A673 (cell line): ENCODE measurements at regions of chr15 and their contacts with region 1.

Region 1: GRCh38 chr15:63551400-63551799 is 45.8 kb upstream of the FBXL22 start:
- DNase-seq: no peak
- H3K4me3 ChIP-seq: no peak overlapping the region
- H3K27ac ChIP-seq: no peak overlapping the region
- H3K4me1 ChIP-seq: peaks cover 28% of the 10 kb centered on the region
- H3K27me3 ChIP-seq: no peaks in the 10 kb centered on the region
- CTCF ChIP-seq: no peak

Region 2: GRCh38 chr15:63514531-63514943 is 36.9 kb before region 1 on chr15:
- CTCF ChIA-PET with region 1: no interaction called
- POLR2A ChIA-PET with region 1: interaction called, 16 read pairs
- intact Hi-C with region 1: no loop called
- DNase-seq: no peak
- H3K4me3 ChIP-seq: no peak overlapping the region
- H3K27ac ChIP-seq: peak overlapping the region; percentile 39
- H3K4me1 ChIP-seq: peaks cover 49% of the 10 kb centered on the region
- H3K27me3 ChIP-seq: no peaks in the 10 kb centered on the region
- CTCF ChIP-seq: no peak